ENCODE measurements at regions of chr12 and their contacts with region 1.

Region 1: GRCh38 chr12:118404876-118405521 is 28.6 kb downstream of the SUDS3 start:
- DNase-seq: peak; percentile 23 to 52 (median 37)
- H3K4me3 ChIP-seq: no peak overlapping the region
- H3K4me3 Mint-ChIP-seq: no peak overlapping the region
- H3K27ac ChIP-seq: no peak overlapping the region
- H3K27ac Mint-ChIP-seq: peak overlapping the region in 1 of 7 donors; percentile 58
- H3K4me1 ChIP-seq: no peaks in the 10 kb centered on the region
- H3K4me1 Mint-ChIP-seq: peaks cover 0 to 5% (median 4%) of the 10 kb centered on the region in 4 donors
- H3K27me3 ChIP-seq: no peaks in the 10 kb centered on the region
- H3K27me3 Mint-ChIP-seq: no peaks in the 10 kb centered on the region

Region 2: DNA sequence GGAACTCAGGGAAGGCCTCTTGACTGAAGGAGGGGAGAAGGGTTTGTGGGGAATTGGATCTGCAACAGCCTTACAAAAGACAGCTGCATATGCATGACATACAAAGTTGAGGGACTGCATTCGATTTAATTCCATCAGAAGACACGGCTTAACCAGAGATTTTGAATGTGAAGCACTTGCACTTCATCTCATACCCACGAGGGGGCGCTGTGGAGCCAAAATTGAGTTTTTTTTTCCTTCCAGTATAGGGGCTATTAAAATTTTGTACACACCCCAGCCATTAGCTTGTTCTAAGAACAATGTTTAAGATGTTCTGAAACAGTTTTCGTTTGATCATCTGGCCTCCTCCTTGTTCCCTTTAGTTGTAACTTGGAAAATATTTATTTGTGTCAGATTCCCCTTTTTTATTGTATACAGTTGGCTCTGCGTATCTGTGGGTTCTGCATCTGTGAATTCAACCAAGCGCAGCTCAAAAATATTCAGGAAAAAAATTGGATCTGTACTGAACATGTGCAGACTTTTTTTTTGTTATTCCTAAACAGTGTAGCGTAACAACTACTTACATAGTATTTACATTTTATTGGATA is 27.0 kb before region 1 on chr12:
- CTCF ChIA-PET with region 1: interaction called, 11 read pairs
- POLR2A ChIA-PET with region 1: no interaction called
- intact Hi-C with region 1: no loop called
- DNase-seq: peak; percentile 65 to 75 (median 72)
- H3K4me3 ChIP-seq: peak overlapping the region; percentile 61 to 66
- H3K4me3 Mint-ChIP-seq: peak overlapping the region; percentile 82 to 98 (median 96)
- H3K27ac ChIP-seq: peak overlapping the region; percentile 86
- H3K27ac Mint-ChIP-seq: peak overlapping the region; percentile 76 to 100 (median 97)
- H3K4me1 ChIP-seq: peaks cover 36% of the 10 kb centered on the region
- H3K4me1 Mint-ChIP-seq: peaks cover 22 to 42% (median 33%) of the 10 kb centered on the region in 4 donors
- H3K27me3 ChIP-seq: no peaks in the 10 kb centered on the region
- H3K27me3 Mint-ChIP-seq: no peaks in the 10 kb centered on the region

Region 3: GRCh38 chr12:119544765-119545625 is 1140.0 kb after region 1 on chr12:
- CTCF ChIA-PET with region 1: interaction called, 23 read pairs
- POLR2A ChIA-PET with region 1: no interaction called
- intact Hi-C with region 1: no loop called
- DNase-seq: peak; percentile 38 to 54 (median 42)
- H3K4me3 ChIP-seq: no peak overlapping the region
- H3K4me3 Mint-ChIP-seq: no peak overlapping the region
- H3K27ac ChIP-seq: no peak overlapping the region
- H3K27ac Mint-ChIP-seq: no peak overlapping the region
- H3K4me1 ChIP-seq: no peaks in the 10 kb centered on the region
- H3K4me1 Mint-ChIP-seq: no peaks in the 10 kb centered on the region
- H3K27me3 ChIP-seq: no peaks in the 10 kb centered on the region
- H3K27me3 Mint-ChIP-seq: peaks cover 36 to 42% of the 10 kb centered on the region in 2 donors

Region 4: DNA sequence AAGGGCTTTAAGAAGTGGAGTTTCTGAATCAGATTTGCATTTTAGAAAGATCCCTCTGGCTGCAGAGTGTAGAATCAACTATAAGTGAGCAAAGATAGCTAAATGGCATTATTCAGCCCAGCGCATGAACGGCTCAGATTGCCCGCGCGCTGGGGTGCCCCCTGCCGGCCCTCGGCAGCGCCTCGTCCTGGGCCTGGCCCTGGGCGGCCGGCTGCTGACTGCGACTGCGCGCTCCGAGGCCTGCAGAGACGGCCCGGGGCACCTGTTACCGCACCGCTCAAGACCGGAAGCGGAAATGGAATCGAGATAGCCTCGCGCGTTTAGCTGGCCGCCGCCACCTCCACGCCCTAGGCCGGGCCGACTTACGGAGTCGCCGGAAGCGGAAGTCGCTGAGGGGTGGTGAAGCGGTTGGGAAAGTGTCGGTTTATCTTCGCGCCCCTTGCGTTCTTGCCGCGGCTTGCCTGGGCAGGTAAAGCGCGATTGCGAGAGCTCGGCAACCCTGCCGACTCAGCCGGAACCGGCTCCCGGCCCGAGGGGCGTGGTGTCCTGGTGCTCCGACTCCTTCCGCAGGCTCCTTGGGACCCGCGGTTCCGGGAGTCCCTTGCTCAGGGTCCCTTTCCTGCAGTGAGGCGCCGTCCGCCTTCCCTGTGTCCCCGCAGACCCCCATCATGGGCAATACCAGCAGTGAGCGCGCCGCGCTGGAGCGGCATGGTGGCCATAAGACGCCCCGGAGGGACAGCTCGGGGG is 1262.8 kb after region 1 on chr12 and contains the start of gene PRKAB1:
- CTCF ChIA-PET with region 1: no interaction called
- POLR2A ChIA-PET with region 1: no interaction called
- intact Hi-C with region 1: loop called (anchors 10 kb)
- DNase-seq: peak; percentile 94 to 97 (median 96)
- H3K4me3 ChIP-seq: peak within 1 kb of the TSS; percentile 67 to 98
- H3K4me3 Mint-ChIP-seq: peak within 1 kb of the TSS; percentile 88 to 93 (median 90)
- H3K27ac ChIP-seq: peak within 1 kb of the TSS; percentile 78
- H3K27ac Mint-ChIP-seq: peak within 1 kb of the TSS; percentile 88 to 95 (median 93)
- H3K4me1 ChIP-seq: peaks cover 53% of the 10 kb centered on the region
- H3K4me1 Mint-ChIP-seq: peaks cover 30 to 67% (median 47%) of the 10 kb centered on the region in 4 donors
- H3K27me3 ChIP-seq: no peaks in the 10 kb centered on the region
- H3K27me3 Mint-ChIP-seq: no peaks in the 10 kb centered on the region
- total RNA-seq, gene PRKAB1: 43.4 to 47.6 TPM

Region 5: GRCh38 chr12:119938049-119938667 is 1533.2 kb after region 1 on chr12:
- CTCF ChIA-PET with region 1: no interaction called
- POLR2A ChIA-PET with region 1: no interaction called
- intact Hi-C with region 1: loop called (anchors 5 kb)
- DNase-seq: peak; percentile 49 to 62 (median 52)
- H3K4me3 ChIP-seq: no peak overlapping the region
- H3K4me3 Mint-ChIP-seq: no peak overlapping the region
- H3K27ac ChIP-seq: no peak overlapping the region
- H3K27ac Mint-ChIP-seq: no peak overlapping the region
- H3K4me1 ChIP-seq: no peaks in the 10 kb centered on the region
- H3K4me1 Mint-ChIP-seq: peaks cover 0 to 2% (median 0%) of the 10 kb centered on the region in 4 donors
- H3K27me3 ChIP-seq: no peaks in the 10 kb centered on the region
- H3K27me3 Mint-ChIP-seq: peaks cover 0 to 2% of the 10 kb centered on the region in 2 donors

Measured in CD4-positive, alpha-beta memory T cell (primary cell).